ENCODE measurements at regions of chr2 and their contacts with region 1.

Region 1: DNA sequence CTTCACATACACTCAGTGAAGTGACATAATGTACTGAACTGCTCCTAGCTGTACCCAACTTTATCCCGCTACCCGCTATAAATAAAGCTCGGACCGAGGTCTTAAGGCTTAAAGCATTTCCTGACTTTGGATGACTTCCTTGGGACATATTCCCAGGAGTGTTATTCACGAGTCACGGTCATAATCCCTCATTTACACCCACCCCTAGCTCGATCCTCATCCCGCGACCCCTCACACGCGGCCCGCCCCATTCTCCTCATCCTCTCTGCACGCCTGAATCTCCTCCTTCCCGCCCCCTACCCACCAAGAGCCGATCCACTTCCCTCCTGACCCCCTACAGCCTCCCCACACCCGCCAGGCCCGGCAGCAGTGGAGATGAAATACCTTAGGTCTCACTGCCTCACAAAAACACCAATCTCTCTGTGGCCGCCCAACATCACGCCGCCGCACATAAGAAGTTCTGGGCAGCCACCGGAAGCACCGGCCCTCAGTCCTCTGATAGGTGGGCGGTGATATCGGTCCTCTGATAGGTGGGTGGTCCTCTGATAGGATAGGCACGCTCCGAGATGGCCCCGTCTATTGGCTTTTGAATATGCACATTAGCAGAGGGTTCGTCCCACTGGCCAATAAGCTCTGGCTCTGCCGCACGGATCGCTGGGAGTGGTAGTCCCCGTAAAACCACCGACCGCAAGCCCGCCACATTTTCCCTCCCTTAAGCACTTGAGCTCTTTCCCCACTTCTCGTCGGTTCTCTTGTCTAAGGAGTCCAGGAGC is at the start of gene WDCP:
- DNase-seq: peak; percentile 98
- H3K4me3 Mint-ChIP-seq: peak within 1 kb of the TSS; percentile 95
- H3K27ac Mint-ChIP-seq: peak within 1 kb of the TSS; percentile 80
- H3K4me1 Mint-ChIP-seq: peaks cover 22% of the 10 kb centered on the region
- H3K27me3 Mint-ChIP-seq: peaks cover 7% of the 10 kb centered on the region
- total RNA-seq, gene WDCP: 17.6 to 21.1 TPM

Region 2: DNA sequence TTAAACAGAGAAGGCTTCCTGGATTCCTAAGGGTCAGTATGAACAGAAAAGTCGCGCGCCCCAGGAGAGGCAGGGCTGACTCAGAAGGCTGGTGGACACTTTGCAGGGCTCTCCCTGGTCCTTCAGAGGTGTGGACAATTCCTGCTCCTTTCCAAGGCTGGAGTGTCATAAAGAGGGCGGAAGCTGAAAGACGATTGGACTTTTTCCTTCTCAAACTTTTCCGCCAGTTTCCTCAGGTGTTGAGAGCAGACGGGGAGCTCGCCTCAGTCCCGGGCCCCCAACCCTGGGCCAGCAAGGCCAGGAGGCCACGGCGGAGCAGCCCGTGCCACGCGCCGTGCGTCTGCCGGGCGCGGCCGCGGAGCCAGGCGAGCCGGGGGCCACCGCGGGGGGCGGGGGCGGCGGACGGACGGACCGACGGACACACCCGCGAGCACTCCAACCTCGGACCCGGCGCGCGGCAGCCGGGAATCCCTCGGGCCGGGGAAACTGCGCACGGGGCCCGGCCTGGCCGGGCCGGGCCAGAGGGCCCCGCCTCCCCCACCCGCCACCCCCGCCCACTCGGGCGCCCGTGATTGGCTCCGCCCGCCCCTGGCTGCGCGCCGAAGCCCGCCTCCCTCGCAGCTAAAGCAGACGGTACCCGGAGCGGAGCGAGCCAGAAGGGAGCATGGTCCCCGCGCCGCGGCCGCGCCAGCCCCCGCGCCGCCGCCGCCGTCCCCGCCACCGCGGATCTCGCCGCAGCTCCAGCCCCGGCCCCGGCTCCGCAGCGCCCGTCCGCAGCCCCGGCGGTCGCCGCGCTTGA is 662.4 kb before region 1 on chr2 and contains the start of gene KLHL29:
- CTCF ChIA-PET with region 1: no interaction called
- intact Hi-C with region 1: loop called (anchors 1 kb)
- DNase-seq: peak; percentile 73
- H3K4me3 Mint-ChIP-seq: peak within 1 kb of the TSS; percentile 76
- H3K27ac Mint-ChIP-seq: no peak within 1 kb of the TSS
- H3K4me1 Mint-ChIP-seq: peaks cover 32% of the 10 kb centered on the region
- H3K27me3 Mint-ChIP-seq: peaks cover 38% of the 10 kb centered on the region
- total RNA-seq, gene KLHL29: 2.4 to 2.9 TPM

Region 3: DNA sequence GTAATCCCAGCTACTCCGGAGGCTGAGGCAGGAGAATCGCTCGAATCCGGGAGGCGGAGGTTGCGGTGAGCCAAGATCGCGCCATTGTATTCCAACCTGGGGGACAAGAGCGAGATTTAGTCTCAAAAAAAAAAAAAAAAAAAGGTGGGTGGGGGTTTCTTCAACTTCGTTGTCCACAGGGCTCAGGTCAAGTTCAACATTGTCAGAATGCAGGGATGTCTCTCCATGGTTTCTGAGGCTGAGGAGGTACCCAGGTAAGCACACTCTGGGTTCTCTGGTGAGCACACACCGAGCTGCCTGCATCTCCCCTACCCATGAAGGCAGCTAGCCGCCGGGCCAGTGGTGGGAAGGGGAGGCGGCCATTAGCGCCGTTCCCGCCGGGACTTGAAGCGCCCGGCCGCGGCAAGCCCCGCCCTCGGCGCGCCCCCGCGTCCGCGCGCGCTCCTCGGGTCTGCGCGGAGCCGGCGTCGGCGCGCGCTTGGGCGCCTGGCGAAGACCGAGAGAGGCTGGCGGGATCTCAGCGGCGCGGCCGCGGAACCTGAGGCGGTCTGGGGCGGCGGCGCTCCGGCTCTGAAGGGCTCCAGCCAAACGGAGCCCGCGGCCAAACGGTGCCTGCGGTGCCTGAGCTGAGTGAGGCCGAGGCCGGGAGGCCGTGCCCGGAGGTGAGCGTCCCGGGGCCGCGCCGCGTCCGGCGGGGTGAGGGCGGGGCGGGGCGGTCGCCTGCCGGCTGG is 107.0 kb before region 1 on chr2 and contains the start of gene UBXN2A:
- CTCF ChIA-PET with region 1: no interaction called
- intact Hi-C with region 1: loop called (anchors 1 kb)
- DNase-seq: peak; percentile 71
- H3K4me3 Mint-ChIP-seq: peak within 1 kb of the TSS; percentile 88
- H3K27ac Mint-ChIP-seq: peak within 1 kb of the TSS; percentile 84
- H3K4me1 Mint-ChIP-seq: peaks cover 15% of the 10 kb centered on the region
- H3K27me3 Mint-ChIP-seq: peaks cover 8% of the 10 kb centered on the region
- total RNA-seq, gene UBXN2A: 7.6 to 7.7 TPM

Region 4: DNA sequence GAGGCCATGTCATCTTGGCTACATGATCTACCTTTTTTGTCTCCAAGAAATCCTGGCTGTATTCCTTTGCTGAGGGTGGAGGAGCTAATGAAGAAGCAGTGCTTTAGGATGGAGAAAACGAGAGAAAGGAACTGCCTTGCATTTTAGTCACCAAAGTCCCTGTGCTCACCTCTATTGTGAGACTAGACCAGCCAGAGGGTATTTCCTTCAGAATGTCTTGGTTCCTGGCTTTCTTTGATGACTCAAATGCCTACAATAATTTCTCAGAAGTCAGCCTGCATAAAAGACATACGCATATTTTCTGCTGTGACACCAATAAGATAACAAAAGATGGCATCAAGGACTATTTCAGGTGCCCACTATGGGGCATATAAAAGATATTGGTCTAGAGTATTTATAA is 18.2 kb after region 1 on chr2:
- CTCF ChIA-PET with region 1: interaction called, 5 read pairs
- intact Hi-C with region 1: loop called (anchors 1 kb)
- DNase-seq: no peak
- H3K4me3 Mint-ChIP-seq: no peak overlapping the region
- H3K27ac Mint-ChIP-seq: no peak overlapping the region
- H3K4me1 Mint-ChIP-seq: peaks cover 11% of the 10 kb centered on the region
- H3K27me3 Mint-ChIP-seq: no peaks in the 10 kb centered on the region

Region 5: DNA sequence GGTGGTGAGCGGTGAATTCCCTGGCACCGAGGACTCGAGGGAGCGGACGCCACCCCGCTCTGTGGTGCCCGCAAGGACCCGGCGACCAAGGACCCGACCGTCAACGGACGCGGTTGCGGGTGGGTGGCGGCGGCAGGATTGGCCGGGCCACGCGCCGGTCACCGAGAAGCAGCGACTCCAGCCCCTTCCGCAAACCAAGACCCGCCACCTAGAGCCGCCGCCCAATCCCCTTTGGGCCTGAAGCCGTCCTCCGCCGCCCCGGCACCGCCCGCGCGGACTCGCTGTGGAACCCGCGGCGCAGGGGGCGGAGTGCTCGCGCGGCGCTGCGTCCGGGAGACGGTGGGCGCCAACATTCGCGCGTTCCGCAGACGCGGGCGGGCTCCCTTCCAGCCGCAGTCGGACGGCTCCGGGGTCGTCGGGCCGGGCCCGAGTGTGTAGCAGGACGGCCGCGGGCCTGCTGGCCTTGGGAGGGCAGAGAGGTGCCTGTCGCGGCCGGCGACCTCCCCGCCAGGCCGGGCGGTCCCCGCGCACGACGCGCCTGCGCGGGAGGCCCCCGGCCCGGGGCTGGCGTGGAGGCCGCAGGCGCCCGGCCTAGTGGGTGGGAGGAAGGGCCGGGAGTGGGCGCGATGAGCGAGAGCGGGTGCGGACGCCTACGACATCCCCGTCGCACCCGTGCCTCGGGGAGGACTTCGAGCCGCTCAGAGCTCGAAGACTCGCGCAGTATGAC is 76.2 kb after region 1 on chr2 and contains the starts of genes FAM228B and PFN4:
- CTCF ChIA-PET with region 1: no interaction called
- intact Hi-C with region 1: loop called (anchors 1 kb)
- DNase-seq: peak; percentile 83
- H3K4me3 Mint-ChIP-seq: peak within 1 kb of the TSS; percentile 75
- H3K27ac Mint-ChIP-seq: peak within 1 kb of the TSS; percentile 8
- H3K4me1 Mint-ChIP-seq: peaks cover 5% of the 10 kb centered on the region
- H3K27me3 Mint-ChIP-seq: peaks cover 5% of the 10 kb centered on the region
- total RNA-seq, gene FAM228B: 3.6 to 4.1 TPM
- total RNA-seq, gene PFN4: 0.32 TPM in 1 of 2 experiments, not detected in the other

Region 6: GRCh38 chr2:24360050-24360962 is 313.2 kb after region 1 on chr2 and contains the start of gene ITSN2:
- CTCF ChIA-PET with region 1: no interaction called
- intact Hi-C with region 1: loop called (anchors 1 kb)
- DNase-seq: peak; percentile 84
- H3K4me3 Mint-ChIP-seq: peak within 1 kb of the TSS; percentile 82
- H3K27ac Mint-ChIP-seq: peak within 1 kb of the TSS; percentile 88
- H3K4me1 Mint-ChIP-seq: peaks cover 25% of the 10 kb centered on the region
- H3K27me3 Mint-ChIP-seq: no peaks in the 10 kb centered on the region
- total RNA-seq, gene ITSN2: 46.1 to 46.7 TPM